ENCODE measurements at regions of chr9 and their contacts with region 1.

Region 1: GRCh38 chr9:128117613-128118471 is 9.7 kb downstream of the PTGES2 start:
- DNase-seq: peak; percentile 94
- ATAC-seq: peak; percentile 52
- H3K4me3 ChIP-seq: no peak overlapping the region
- H3K4me3 Mint-ChIP-seq: no peak overlapping the region
- H3K27ac ChIP-seq: no peak overlapping the region
- H3K27ac Mint-ChIP-seq: peak overlapping the region; percentile 78
- H3K4me1 ChIP-seq: peaks cover 37 to 42% of the 10 kb centered on the region in 2 donors
- H3K4me1 Mint-ChIP-seq: peaks cover 38% of the 10 kb centered on the region
- H3K27me3 ChIP-seq: no peaks in the 10 kb centered on the region
- H3K27me3 Mint-ChIP-seq: no peaks in the 10 kb centered on the region
- CTCF ChIP-seq: peak; percentile 100

Region 2: GRCh38 chr9:128081056-128081455 is 36.8 kb before region 1 on chr9:
- CTCF ChIA-PET with region 1: interaction called, 13 read pairs
- POLR2A ChIA-PET with region 1: no interaction called
- intact Hi-C with region 1: no loop called
- DNase-seq: no peak
- ATAC-seq: no peak
- H3K4me3 ChIP-seq: no peak overlapping the region
- H3K4me3 Mint-ChIP-seq: no peak overlapping the region
- H3K27ac ChIP-seq: no peak overlapping the region
- H3K27ac Mint-ChIP-seq: no peak overlapping the region
- H3K4me1 ChIP-seq: peaks cover 3 to 4% of the 10 kb centered on the region in 2 donors
- H3K4me1 Mint-ChIP-seq: peaks cover 29% of the 10 kb centered on the region
- H3K27me3 ChIP-seq: no peaks in the 10 kb centered on the region
- H3K27me3 Mint-ChIP-seq: no peaks in the 10 kb centered on the region
- CTCF ChIP-seq: no peak

Region 3: DNA sequence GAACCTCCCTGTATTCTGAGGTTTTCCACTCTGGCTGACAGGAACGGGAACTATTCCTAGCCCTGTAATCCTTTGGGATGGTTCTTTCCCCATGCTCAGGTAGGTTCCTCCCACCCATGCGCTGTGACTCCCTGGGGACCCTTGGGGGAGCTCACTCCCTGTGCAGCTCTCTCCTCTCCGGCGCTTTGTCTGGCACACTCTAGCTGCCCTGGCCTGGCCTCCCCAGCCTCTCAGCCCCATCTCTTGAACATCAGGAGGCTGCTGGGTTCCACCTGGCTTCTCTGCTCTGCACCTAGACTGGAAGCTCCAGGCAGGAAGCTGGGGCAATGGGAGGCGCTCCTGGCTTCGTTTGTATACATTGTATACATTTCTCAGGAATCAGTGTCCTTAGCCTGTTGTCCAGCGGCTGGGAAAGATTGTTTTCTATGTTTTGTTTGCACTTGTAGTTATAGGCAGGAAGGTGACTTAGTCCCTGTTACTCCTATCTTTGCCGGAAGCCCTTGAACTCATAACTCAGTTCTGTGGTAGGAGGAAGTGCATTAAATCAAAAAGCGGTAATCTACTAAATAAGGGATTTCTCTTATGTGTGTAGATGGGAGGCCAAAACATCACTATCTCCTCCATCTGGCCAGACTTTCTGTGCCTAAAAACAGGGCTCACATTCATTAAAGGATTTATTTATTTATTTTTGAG is 29.4 kb before region 1 on chr9:
- CTCF ChIA-PET with region 1: interaction called, 44 read pairs
- POLR2A ChIA-PET with region 1: interaction called, 4 read pairs
- intact Hi-C with region 1: no loop called
- DNase-seq: no peak
- ATAC-seq: no peak
- H3K4me3 ChIP-seq: no peak overlapping the region
- H3K4me3 Mint-ChIP-seq: no peak overlapping the region
- H3K27ac ChIP-seq: no peak overlapping the region
- H3K27ac Mint-ChIP-seq: no peak overlapping the region
- H3K4me1 ChIP-seq: peaks cover 10 to 17% of the 10 kb centered on the region in 2 donors
- H3K4me1 Mint-ChIP-seq: peaks cover 24% of the 10 kb centered on the region
- H3K27me3 ChIP-seq: no peaks in the 10 kb centered on the region
- H3K27me3 Mint-ChIP-seq: no peaks in the 10 kb centered on the region
- CTCF ChIP-seq: no peak

Region 4: GRCh38 chr9:128094166-128094967 is 23.5 kb before region 1 on chr9:
- CTCF ChIA-PET with region 1: interaction called, 44 read pairs
- POLR2A ChIA-PET with region 1: interaction called, 5 read pairs
- intact Hi-C with region 1: loop called (anchors 1 kb)
- DNase-seq: peak; percentile 92
- ATAC-seq: peak; percentile 93
- H3K4me3 ChIP-seq: peak overlapping the region in 1 of 5 experiments; percentile 6
- H3K4me3 Mint-ChIP-seq: peak overlapping the region; percentile 83
- H3K27ac ChIP-seq: peak overlapping the region; percentile 75 to 94
- H3K27ac Mint-ChIP-seq: peak overlapping the region; percentile 98
- H3K4me1 ChIP-seq: peaks cover 31 to 43% of the 10 kb centered on the region in 2 donors
- H3K4me1 Mint-ChIP-seq: peaks cover 43% of the 10 kb centered on the region
- H3K27me3 ChIP-seq: no peaks in the 10 kb centered on the region
- H3K27me3 Mint-ChIP-seq: no peaks in the 10 kb centered on the region
- CTCF ChIP-seq: no peak

Region 5: GRCh38 chr9:128127990-128128835 is 10.4 kb after region 1 on chr9:
- CTCF ChIA-PET with region 1: interaction called, 49 read pairs
- POLR2A ChIA-PET with region 1: interaction called, 12 read pairs
- intact Hi-C with region 1: loop called (anchors 1 kb)
- DNase-seq: peak; percentile 97
- ATAC-seq: peak; percentile 78
- H3K4me3 ChIP-seq: peak overlapping the region; percentile 58 to 97 (median 83)
- H3K4me3 Mint-ChIP-seq: peak overlapping the region; percentile 95
- H3K27ac ChIP-seq: peak overlapping the region; percentile 93 to 99
- H3K27ac Mint-ChIP-seq: peak overlapping the region; percentile 99
- H3K4me1 ChIP-seq: peaks cover 26 to 34% of the 10 kb centered on the region in 2 donors
- H3K4me1 Mint-ChIP-seq: peaks cover 35% of the 10 kb centered on the region
- H3K27me3 ChIP-seq: peaks cover 0 to 6% (median 0%) of the 10 kb centered on the region in 4 experiments
- H3K27me3 Mint-ChIP-seq: peaks cover 7% of the 10 kb centered on the region
- CTCF ChIP-seq: no peak

Region 6: DNA sequence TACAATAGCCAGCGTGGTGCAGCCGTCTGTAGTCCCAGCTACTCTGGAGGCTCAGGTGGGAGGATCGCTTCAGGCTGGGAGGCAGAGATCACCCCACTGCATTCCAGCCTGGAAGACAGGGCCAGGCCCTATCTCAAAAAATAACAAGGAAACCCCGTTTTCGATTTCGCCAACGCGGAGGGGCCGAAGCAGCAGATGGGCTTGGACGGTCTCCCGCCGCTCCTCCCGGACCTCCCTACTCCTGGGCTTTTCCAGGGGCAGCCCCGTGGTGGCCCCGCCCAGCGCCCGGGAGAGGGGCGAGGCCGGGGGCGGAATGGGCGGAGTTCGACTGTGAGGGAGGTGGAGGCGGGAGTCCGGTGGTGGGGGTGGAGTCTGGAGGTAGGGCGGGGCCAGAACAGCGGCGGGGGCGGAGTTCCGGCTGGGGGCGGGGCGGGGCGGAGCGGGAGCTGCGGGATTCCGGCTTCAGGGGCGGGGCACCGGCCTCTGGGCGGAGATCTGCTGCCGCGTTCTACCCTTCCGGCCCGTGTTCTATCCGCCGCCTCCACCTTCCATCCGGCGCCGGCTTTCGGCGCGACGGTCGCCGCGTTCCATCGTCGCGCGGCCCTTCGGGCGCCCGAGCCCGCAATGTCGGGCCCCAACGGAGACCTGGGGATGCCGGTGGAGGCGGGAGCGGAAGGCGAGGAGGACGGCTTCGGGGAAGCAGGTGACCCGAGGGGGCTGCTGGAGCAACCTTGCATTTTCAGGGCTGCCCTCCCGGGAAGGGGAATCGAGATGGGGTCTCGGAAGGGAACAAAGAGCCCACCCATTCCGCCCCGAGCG is 42.2 kb after region 1 on chr9 and contains the start of gene BBLN:
- CTCF ChIA-PET with region 1: no interaction called
- POLR2A ChIA-PET with region 1: no interaction called
- intact Hi-C with region 1: no loop called
- DNase-seq: peak; percentile 92
- ATAC-seq: peak; percentile 94
- H3K4me3 ChIP-seq: peak within 1 kb of the TSS; percentile 70 to 99 (median 86)
- H3K4me3 Mint-ChIP-seq: peak within 1 kb of the TSS; percentile 83
- H3K27ac ChIP-seq: peak within 1 kb of the TSS; percentile 72
- H3K27ac Mint-ChIP-seq: peak within 1 kb of the TSS; percentile 87
- H3K4me1 ChIP-seq: peaks cover 6 to 17% of the 10 kb centered on the region in 2 donors
- H3K4me1 Mint-ChIP-seq: peaks cover 12% of the 10 kb centered on the region
- H3K27me3 ChIP-seq: no peaks in the 10 kb centered on the region
- H3K27me3 Mint-ChIP-seq: no peaks in the 10 kb centered on the region
- CTCF ChIP-seq: no peak
- total RNA-seq, gene BBLN: 38.2 and 44.3 TPM in 2 replicates

Region 7: DNA sequence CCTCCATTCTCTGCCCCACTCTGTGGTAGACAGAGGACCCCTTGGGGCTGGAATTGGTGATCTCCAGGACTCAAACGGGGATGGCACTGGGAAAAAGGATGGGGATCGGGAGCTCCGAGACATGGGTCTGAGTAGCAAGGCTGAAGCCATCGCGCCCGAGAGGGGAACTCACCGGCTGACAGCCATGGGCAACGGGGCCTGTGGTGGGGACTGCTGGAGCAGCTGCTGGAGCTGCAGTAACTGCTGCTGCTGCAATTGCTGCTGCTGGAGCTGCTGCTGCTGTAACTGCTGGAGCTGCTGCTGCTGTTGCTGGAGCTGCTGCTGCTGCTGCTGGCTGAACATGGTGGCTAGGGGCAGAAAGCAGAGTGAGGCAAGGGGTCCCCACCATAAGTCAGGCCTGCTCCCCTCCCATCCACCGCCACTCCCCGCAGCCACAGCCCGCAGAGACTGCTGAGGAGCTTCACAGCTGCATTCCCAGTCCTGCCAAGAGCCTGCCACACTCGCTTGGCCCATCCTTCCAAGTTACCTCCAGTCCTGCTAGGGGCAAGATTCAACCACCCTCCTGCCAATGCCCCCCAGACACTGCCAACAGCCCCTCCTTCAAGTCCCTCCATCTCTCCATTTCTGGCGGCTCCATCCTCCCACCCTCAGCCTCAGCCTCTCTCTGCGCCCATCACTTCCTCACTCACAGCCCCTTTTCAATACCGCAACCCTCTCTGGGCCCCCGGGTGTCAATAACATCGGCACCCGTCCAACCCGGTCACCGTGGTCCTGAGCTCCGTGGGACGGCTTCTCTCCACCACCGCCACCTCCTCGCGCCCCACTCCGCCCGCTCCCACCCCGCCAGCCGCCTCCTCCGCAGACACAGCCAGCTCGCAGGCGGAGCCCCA is 72.9 kb after region 1 on chr9:
- CTCF ChIA-PET with region 1: no interaction called
- POLR2A ChIA-PET with region 1: no interaction called
- intact Hi-C with region 1: no loop called
- DNase-seq: no peak
- ATAC-seq: peak; percentile 40
- H3K4me3 ChIP-seq: peak overlapping the region; percentile 13 to 82 (median 72)
- H3K4me3 Mint-ChIP-seq: peak overlapping the region; percentile 94
- H3K27ac ChIP-seq: peak overlapping the region; percentile 44 to 76
- H3K27ac Mint-ChIP-seq: peak overlapping the region; percentile 92
- H3K4me1 ChIP-seq: peaks cover 12 to 24% of the 10 kb centered on the region in 2 donors
- H3K4me1 Mint-ChIP-seq: peaks cover 29% of the 10 kb centered on the region
- H3K27me3 ChIP-seq: no peaks in the 10 kb centered on the region
- H3K27me3 Mint-ChIP-seq: no peaks in the 10 kb centered on the region
- CTCF ChIP-seq: no peak